Activated CD4-positive, alpha-beta T cell treated with anti-CD3 and anti-CD28 coated beads, Interleukin-2, amount 10 ng/mL, durations not matched to agents 7 days and 5 days (primary cell): ENCODE measurements at regions of chr1 and their contacts with region 1.

Region 1: DNA sequence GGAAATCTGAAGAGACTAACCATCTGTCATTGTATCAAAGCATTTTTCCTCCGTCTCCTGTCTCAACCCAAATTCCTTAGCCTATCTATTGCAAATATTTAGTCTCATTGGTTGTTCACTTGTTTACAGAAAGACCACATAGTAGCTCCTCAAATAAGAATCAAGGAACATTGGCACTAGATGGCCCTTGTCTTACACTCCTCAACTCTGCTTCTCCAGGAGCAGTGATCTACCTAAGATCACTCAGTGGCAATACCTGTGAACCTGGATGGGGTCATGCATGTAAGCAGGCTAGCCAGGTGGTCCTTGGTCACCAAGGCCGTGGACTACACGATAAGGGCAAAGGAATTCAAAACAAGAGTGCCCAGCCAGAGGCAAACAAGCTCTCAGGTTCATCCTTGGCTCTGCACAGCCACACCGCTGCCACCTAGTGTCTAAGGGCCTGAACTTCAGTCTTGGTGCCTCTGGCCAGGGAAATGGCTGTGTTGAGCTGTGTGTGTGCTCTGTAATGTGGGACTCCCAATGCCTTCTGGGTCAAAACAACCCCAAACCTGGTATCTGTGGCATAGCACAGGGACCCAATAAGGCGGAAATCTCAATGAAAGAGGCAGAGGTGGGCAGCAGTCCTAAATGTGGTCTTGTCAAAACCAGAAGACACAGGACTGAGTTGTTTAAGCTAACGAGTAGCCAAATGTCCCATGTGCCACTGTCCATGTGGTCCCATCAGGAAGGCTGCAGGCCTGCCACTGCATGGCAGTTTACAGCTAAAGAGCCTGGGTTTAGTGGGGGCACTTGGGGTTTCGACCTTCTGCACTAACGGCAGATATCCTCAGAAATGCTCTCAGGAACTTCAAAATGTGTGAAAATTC is 54.5 kb downstream of the GPR161 start:
- DNase-seq: peak; percentile 78
- H3K4me3 Mint-ChIP-seq: no peak overlapping the region
- H3K27ac Mint-ChIP-seq: no peak overlapping the region
- H3K4me1 Mint-ChIP-seq: peaks cover 4% of the 10 kb centered on the region
- H3K27me3 Mint-ChIP-seq: no peaks in the 10 kb centered on the region

Region 2: GRCh38 chr1:168032029-168032428 is 50.2 kb before region 1 on chr1:
- CTCF ChIA-PET with region 1: no interaction called
- POLR2A ChIA-PET with region 1: no interaction called
- DNase-seq: no peak
- H3K4me3 Mint-ChIP-seq: no peak overlapping the region
- H3K27ac Mint-ChIP-seq: no peak overlapping the region
- H3K4me1 Mint-ChIP-seq: no peaks in the 10 kb centered on the region
- H3K27me3 Mint-ChIP-seq: no peaks in the 10 kb centered on the region

Region 3: DNA sequence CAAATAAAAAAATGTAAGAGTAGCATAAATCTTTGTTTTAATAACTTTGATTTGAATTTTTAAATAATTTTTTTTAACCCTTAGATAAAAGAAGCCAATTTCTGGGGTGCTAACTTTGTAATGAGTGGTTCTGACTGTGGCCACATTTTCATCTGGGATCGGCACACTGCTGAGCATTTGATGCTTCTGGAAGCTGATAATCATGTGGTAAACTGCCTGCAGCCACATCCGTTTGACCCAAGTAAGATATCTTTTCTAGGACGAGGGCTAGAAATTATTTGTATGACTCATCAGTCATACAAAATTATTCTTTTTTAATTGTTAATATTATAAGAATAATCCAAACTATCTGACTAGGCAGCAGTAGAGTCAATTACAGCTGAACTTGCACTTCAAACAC is 16.7 kb before region 1 on chr1:
- CTCF ChIA-PET with region 1: interaction called, 11 read pairs
- POLR2A ChIA-PET with region 1: no interaction called
- DNase-seq: no peak
- H3K4me3 Mint-ChIP-seq: no peak overlapping the region
- H3K27ac Mint-ChIP-seq: no peak overlapping the region
- H3K4me1 Mint-ChIP-seq: no peaks in the 10 kb centered on the region
- H3K27me3 Mint-ChIP-seq: no peaks in the 10 kb centered on the region

Region 4: DNA sequence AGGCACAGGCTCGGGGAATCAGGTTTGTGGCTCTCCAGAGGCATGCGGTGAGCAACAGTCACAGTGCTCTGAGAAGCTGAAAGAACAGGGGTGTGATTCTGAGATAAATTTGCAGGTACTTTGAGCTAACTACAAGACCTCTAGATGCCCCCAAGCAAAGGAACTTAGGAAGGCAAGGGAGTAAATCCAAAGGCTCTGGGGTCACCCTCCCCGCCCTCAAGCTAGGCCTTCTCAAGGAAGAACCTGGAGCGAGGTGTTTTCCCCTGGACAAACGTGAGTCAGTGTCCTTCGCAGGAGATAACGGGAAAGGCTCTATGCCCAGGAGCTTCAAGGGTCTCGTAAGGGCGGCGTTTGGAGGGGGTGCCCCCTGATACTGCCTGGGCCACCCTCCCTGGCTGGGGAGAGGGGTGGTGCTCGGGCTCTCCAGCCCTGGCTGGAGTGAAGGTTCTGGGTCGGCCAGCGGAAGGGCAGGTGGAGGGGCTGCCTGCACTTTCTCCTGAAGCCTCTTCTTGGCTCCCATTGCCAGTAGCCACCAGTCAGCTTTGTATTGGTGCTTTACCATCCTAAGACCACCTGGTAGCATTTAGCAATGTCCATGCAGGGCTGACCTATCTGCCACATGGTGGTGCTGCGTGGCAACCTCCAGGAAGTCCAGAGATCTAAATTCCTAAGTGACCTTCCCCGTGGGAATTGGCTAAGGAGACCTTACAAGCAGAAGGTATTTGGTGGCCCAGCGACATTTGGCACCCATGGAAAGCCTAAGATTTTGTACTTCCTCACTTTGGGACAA is 10.5 kb after region 1 on chr1:
- CTCF ChIA-PET with region 1: interaction called, 45 read pairs
- POLR2A ChIA-PET with region 1: no interaction called
- DNase-seq: no peak
- H3K4me3 Mint-ChIP-seq: no peak overlapping the region
- H3K27ac Mint-ChIP-seq: no peak overlapping the region
- H3K4me1 Mint-ChIP-seq: no peaks in the 10 kb centered on the region
- H3K27me3 Mint-ChIP-seq: peaks cover 3% of the 10 kb centered on the region